K562 (cell line): ENCODE measurements at regions of chr10 and their contacts with region 1.

Region 1: GRCh38 chr10:110279407-110279986 is 25.2 kb downstream of the SMNDC1 start:
- DNase-seq: peak; percentile 12 to 69 (median 20)
- ATAC-seq: peak; percentile 83
- H3K4me3 ChIP-seq: no peak overlapping the region
- H3K27ac ChIP-seq: no peak overlapping the region
- H3K4me1 ChIP-seq: peaks cover 0 to 10% of the 10 kb centered on the region in 2 experiments; a peak in 3 of 5 replicates
- H3K27me3 ChIP-seq: no peaks in the 10 kb centered on the region
- CTCF ChIP-seq: peak; percentile 50 to 76 (median 66)
- EP300 ChIP-seq: no peak
- POLR2A ChIP-seq: no peak
- RAD21 ChIP-seq: peak; percentile 85 to 92

Region 2: GRCh38 chr10:110225756-110226542 is 53.5 kb before region 1 on chr10:
- CTCF ChIA-PET with region 1: no interaction called
- POLR2A ChIA-PET with region 1: interaction called, 3 read pairs
- in situ Hi-C with region 1: no loop called
- intact Hi-C with region 1: loop called (anchors 5 kb)
- DNase-seq: peak; percentile 75 to 91 (median 81)
- ATAC-seq: peak; percentile 75
- H3K4me3 ChIP-seq: peak overlapping the region; percentile 80
- H3K27ac ChIP-seq: peak overlapping the region; percentile 90
- H3K4me1 ChIP-seq: peaks cover 31% of the 10 kb centered on the region in 2 experiments; a peak in 4 of 5 replicates
- H3K27me3 ChIP-seq: no peaks in the 10 kb centered on the region
- CTCF ChIP-seq: peak; percentile 52 to 71 (median 54); a peak in 5 of 6 replicates
- EP300 ChIP-seq: no peak
- POLR2A ChIP-seq: peak; percentile 67
- RAD21 ChIP-seq: peak; percentile 36 to 61

Region 3: GRCh38 chr10:110241407-110241806 is 38.1 kb before region 1 on chr10:
- CTCF ChIA-PET with region 1: no interaction called
- POLR2A ChIA-PET with region 1: interaction called, 3 read pairs
- in situ Hi-C with region 1: no loop called
- intact Hi-C with region 1: loop called (anchors 5 kb)
- DNase-seq: no peak
- ATAC-seq: no peak; the same call in 2 of the 3 replicates
- H3K4me3 ChIP-seq: no peak overlapping the region
- H3K27ac ChIP-seq: no peak overlapping the region
- H3K4me1 ChIP-seq: peaks cover 0 to 9% of the 10 kb centered on the region in 2 experiments; a peak in 2 of 5 replicates
- H3K27me3 ChIP-seq: no peaks in the 10 kb centered on the region
- CTCF ChIP-seq: no peak
- EP300 ChIP-seq: no peak
- POLR2A ChIP-seq: no peak
- RAD21 ChIP-seq: no peak

Region 4: DNA sequence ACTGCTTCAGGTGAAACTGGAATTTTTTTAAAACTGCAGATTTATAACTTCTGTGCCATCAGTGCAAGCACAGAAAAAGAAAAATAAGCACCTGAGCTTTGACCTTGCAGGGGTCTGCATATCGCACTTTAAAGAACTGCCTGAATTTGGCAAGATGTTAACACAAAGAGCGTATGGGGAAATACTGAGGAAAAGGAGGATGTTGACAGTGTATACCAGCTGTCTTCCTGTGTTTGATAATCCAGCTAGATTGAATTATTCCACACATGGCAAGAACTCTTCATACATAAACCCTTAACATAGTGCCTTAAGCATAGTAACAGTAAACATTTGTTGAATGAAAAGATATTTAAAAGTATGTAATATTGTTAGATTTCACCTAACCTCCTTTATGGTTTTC is 318.0 kb after region 1 on chr10:
- CTCF ChIA-PET with region 1: no interaction called
- POLR2A ChIA-PET with region 1: no interaction called
- in situ Hi-C with region 1: no loop called
- intact Hi-C with region 1: no loop called
- DNase-seq: no peak
- ATAC-seq: no peak
- H3K4me3 ChIP-seq: no peak overlapping the region
- H3K27ac ChIP-seq: no peak overlapping the region
- H3K4me1 ChIP-seq: no peaks in the 10 kb centered on the region
- H3K27me3 ChIP-seq: no peaks in the 10 kb centered on the region
- CTCF ChIP-seq: no peak
- EP300 ChIP-seq: no peak
- POLR2A ChIP-seq: no peak
- RAD21 ChIP-seq: no peak